Sciatic nerve (tissue), 2 donors: ENCODE measurements at regions of chr7 and their contacts with region 1.

Region 1: GRCh38 chr7:122622682-122623081 is 76.2 kb downstream of the RNF133 start:
- DNase-seq: no peak
- ATAC-seq: no peak

Region 2: DNA sequence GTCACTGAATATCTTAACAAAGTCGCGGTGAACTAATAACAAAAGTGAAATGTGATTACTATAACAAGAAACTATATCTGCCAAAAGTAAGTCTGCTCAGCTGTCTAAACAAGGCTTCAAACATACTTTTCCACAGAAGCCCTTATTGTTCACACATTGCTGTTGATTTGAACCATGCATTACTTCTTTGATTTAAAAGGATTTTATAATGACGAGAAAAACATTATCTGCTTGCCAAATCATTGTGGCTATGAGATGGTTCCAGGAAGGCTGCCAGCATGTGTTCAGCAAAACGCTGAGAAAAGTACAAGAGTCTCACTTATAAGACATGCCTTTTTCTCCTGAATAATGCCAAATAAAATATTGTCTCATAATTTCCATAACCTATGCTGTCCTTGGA is 51.8 kb after region 1 on chr7:
- intact Hi-C with region 1: loop called (anchors 2 kb)
- DNase-seq: peak; percentile 71
- ATAC-seq: peak; percentile 81